GM18951 (cell line): ENCODE measurements at regions of chr7 and their contacts with region 1.

Region 1: DNA sequence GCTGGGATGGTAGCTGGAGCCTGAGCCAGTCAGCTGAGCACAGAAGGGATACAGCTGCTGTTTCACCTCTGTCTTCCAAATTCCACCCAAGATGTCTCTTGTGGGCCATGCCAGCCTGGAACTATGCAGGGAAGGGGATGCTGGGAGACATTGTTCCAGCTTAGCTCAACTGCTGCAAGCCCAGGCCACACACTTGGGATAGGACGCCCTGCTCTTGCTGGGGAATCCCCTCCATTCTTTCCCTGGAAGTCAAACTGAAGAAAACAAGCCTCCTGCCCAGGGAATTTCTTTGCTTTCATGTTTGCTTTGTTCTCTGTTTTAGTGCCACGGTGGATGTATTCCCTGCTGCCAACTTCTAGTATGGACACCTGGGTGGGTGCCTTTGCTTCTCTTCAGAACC is 55.2 kb upstream of the CDK13 start:
- POLR2A ChIP-seq: no peak

Region 2: GRCh38 chr7:40019558-40019957 is 124.7 kb after region 1 on chr7:
- in situ Hi-C with region 1: no loop called
- POLR2A ChIP-seq: no peak

Region 3: GRCh38 chr7:40057292-40057691 is 162.4 kb after region 1 on chr7:
- in situ Hi-C with region 1: loop called (anchors 10 kb)
- POLR2A ChIP-seq: no peak